Spleen (tissue), 13 donors: ENCODE measurements at regions of chr12 and their contacts with region 1.

Region 1: DNA sequence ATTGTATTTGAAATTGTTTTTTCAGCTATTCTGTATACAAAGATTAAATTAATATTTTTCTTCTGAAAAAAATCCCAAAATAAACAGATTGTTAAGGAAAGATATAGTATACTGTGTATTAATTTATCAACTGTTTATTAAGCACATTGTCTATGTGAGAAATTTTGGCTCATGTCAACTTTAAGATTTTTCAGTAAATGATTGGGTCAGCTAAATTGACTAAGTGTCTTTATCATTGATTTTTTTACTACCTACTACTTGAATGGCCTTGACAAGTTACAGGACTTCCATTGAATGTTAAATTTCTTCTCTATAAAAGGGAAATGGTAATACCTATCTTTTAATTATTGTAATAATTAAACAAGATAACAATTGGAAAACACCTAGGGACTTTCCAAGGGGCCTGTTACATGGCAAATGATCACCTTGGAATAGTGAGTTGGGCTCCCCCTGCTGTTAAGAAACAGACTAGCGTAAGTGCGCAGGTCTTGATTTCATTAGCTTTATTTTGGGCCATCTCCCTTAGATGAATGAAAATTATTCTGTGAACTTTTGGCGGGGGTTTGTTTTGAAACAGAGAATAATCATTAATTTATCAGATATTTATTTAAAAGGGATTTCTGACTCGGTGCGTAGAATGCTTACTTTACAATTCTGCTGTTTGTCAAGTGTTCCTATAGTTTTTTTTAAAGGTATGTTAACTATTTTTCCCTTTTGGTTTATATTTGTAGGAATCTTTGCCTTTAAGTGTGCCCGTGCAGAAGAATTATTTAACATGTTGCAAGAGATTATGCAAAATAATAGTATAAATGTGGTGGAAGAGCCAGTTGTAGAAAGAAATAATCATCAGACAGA is 14.5 kb upstream of the CCT2 start:
- DNase-seq: no peak
- H3K4me3 ChIP-seq: no peak overlapping the region
- H3K27ac ChIP-seq: no peak overlapping the region
- H3K4me1 ChIP-seq: peaks cover 0 to 8% (median 4%) of the 10 kb centered on the region in 6 donors
- H3K27me3 ChIP-seq: no peaks in the 10 kb centered on the region
- CTCF ChIP-seq: peak; percentile 49 to 86 (median 75)
- POLR2A ChIP-seq: no peak

Region 2: DNA sequence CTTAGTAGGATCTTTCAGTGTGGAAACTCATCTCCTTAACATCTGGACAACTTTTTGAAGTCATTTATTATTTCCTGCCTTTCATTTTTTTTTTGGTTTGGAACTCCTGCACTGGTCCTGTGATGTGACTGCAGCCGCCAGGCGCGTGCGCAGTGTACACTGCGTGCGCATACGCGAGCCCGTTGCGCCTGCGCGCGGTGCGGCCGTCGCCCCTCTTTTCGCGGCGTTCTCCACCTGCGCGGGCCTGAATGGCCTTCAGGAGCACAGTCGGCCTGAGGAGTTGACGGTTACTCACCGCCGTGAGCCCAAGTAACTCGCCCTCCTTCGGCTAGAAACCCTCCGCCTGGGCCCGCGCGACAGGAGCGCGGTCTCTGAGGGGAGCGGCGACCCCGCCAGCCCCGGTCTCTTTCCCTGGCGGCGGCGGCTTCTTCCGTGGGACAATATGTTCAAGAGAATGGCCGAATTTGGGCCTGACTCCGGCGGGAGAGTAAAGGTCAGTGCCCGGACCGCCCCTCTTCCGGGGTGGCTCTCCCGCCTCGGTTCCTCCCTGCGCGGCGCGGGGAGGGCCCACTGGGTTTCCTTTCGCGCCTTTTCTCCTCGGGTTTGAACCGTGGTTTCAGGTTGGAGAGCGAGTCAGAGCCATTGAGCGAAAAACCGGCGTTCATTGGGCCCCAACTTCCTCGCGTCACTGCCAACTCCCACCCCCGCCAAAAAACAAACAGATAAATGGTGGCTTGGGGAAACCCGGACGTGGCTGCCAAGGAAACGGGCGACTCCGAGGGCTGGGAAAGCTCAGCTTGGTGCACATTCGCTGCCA is 211.0 kb before region 1 on chr12 and contains the start of gene YEATS4:
- intact Hi-C with region 1: loop called (anchors 5 kb)
- DNase-seq: peak; percentile 96
- H3K4me3 ChIP-seq: peak within 1 kb of the TSS; percentile 83 to 96 (median 94)
- H3K27ac ChIP-seq: peak within 1 kb of the TSS; percentile 88 to 99 (median 98)
- H3K4me1 ChIP-seq: peaks cover 6 to 49% (median 28%) of the 10 kb centered on the region in 6 donors
- H3K27me3 ChIP-seq: no peaks in the 10 kb centered on the region
- CTCF ChIP-seq: peak in 4 of 11 experiments; percentile 4 to 18 (median 17)
- POLR2A ChIP-seq: peak in 1 of 3 donors; percentile 29
- total RNA-seq, gene YEATS4: 11.3 to 36.5 (median 15.4) TPM

Region 3: GRCh38 chr12:69484428-69484827 is 86.3 kb before region 1 on chr12:
- intact Hi-C with region 1: loop called (anchors 10 kb)
- DNase-seq: no peak
- H3K4me3 ChIP-seq: no peak overlapping the region
- H3K27ac ChIP-seq: no peak overlapping the region
- H3K4me1 ChIP-seq: peaks cover 0 to 75% (median 33%) of the 10 kb centered on the region in 6 donors
- H3K27me3 ChIP-seq: no peaks in the 10 kb centered on the region
- CTCF ChIP-seq: no peak
- POLR2A ChIP-seq: no peak